Psoas muscle (tissue), 8 donors: ENCODE measurements at regions of chr10 and their contacts with region 1.

Region 1: DNA sequence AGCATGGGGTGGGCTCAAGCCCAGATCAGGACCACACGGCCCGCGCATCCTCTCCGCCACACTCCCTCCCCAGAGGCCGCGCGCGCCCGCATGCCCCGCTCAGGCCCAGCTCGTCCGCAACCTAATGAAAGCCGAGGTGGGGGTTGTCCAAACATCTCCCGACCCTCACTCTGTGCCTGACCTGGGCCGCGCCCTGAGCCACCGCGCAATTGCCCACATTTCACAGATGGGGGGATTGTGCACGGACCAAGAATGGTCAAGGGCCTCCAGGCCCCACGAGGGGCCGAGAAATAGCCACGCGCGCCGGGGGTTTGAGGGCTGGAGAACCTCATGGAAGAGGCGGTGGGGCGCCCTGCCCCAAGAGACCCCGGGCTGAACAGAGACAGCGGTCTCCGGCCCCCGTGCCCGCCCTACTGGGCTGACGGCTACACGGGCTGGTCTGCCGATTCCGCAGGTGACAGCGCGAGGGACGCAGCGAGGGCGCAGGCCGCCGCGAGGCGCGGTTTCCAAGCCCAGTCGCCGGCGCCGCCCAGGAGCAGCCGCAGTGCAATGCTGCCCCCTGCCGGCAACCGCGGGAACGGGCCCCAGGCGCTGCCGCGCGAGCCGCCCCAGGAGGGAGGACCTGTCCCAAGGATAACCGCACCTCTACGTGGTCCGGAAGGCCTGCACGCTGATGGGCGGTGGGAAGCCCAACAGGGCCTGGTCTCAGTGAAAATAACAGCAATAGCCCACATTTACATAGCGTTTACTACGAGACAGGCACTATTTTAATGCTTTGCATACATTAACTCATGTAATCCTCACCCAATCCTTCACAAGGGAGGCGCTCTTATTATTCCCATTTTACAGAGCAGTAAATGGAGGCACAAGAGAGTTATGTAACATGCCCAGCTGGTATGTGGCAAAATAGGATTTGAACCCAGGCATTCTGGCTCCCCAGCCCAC is 10.5 kb upstream of the GRID1 start:
- DNase-seq: peak; percentile 72 to 84
- ATAC-seq: peak; percentile 95 to 99 (median 96)
- H3K4me3 ChIP-seq: peak overlapping the region; percentile 52
- H3K27ac ChIP-seq: no peak overlapping the region
- H3K4me1 ChIP-seq: peaks cover 3% of the 10 kb centered on the region
- H3K27me3 ChIP-seq: peaks cover 0 to 37% (median 3%) of the 10 kb centered on the region in 3 donors
- CTCF ChIP-seq: peak; percentile 100

Region 2: DNA sequence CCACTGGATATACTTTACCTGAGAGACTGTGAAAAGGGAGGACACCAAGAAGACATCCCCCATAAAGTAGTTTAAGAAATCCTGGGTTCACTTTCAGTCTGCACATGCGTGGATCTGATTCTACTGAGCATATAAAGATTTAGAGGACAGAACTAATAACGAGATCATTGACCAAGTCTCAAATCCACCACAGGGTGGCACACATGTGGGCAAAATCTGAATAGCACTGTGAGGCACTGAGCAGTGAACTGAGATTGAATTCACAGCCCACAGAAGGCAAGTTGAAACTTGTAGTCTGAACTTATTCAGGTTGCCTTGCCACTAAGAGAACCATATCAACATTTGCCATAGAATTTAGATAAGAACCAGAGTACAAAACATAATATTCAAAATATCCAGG is 829.1 kb before region 1 on chr10:
- intact Hi-C with region 1: loop called (anchors 5 kb)
- DNase-seq: no peak
- ATAC-seq: peak in 2 of 4 donors; percentile 43 to 63
- H3K4me3 ChIP-seq: no peak overlapping the region
- H3K27ac ChIP-seq: no peak overlapping the region
- H3K4me1 ChIP-seq: no peaks in the 10 kb centered on the region
- H3K27me3 ChIP-seq: no peaks in the 10 kb centered on the region
- CTCF ChIP-seq: peak; percentile 31

Region 3: GRCh38 chr10:85786401-85786899 is 590.7 kb before region 1 on chr10:
- intact Hi-C with region 1: loop called (anchors 5 kb)
- DNase-seq: no peak
- ATAC-seq: peak in 1 of 4 donors; percentile 49
- H3K4me3 ChIP-seq: no peak overlapping the region
- H3K27ac ChIP-seq: no peak overlapping the region
- H3K4me1 ChIP-seq: no peaks in the 10 kb centered on the region
- H3K27me3 ChIP-seq: no peaks in the 10 kb centered on the region
- CTCF ChIP-seq: peak; percentile 30

Region 4: GRCh38 chr10:85995791-85996190 is 381.3 kb before region 1 on chr10:
- intact Hi-C with region 1: loop called in 1 of 2 experiments (anchors 2 kb)
- DNase-seq: no peak
- ATAC-seq: peak in 3 of 4 donors; percentile 51 to 57 (median 53)
- H3K4me3 ChIP-seq: no peak overlapping the region
- H3K27ac ChIP-seq: no peak overlapping the region
- H3K4me1 ChIP-seq: no peaks in the 10 kb centered on the region
- H3K27me3 ChIP-seq: no peaks in the 10 kb centered on the region
- CTCF ChIP-seq: peak; percentile 56